PC-9 (cell line): ENCODE measurements at regions of chr12 and their contacts with region 1.

Region 1: DNA sequence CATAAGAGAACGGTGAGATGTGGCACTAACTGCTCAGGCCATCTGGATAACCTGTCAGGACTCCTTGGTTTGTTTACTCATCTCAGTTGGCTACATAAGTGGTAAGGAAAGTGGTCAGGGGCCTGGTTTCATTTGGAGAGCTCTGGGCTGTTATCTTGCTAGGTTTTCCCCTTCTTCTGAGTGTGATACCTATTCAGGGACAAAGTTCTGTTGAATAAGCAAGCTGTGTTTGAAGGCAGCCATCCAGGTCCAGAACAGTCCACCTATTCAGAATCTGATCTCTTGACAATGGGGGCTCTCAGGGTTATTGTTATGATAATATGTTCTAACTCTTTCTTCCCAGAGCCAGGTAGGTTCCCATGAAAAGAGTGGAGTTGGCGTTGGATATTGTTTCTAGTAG is 194.9 kb downstream of the PAH start:
- DNase-seq: no peak
- H3K4me3 ChIP-seq: no peak overlapping the region
- H3K27ac ChIP-seq: no peak overlapping the region
- H3K4me1 ChIP-seq: no peaks in the 10 kb centered on the region
- H3K27me3 ChIP-seq: no peaks in the 10 kb centered on the region
- CTCF ChIP-seq: no peak

Region 2: GRCh38 chr12:102618197-102618877 is 103.8 kb before region 1 on chr12:
- CTCF ChIA-PET with region 1: no interaction called
- POLR2A ChIA-PET with region 1: interaction called, 11 read pairs
- intact Hi-C with region 1: no loop called
- DNase-seq: no peak
- H3K4me3 ChIP-seq: no peak overlapping the region
- H3K27ac ChIP-seq: no peak overlapping the region
- H3K4me1 ChIP-seq: no peaks in the 10 kb centered on the region
- H3K27me3 ChIP-seq: no peaks in the 10 kb centered on the region
- CTCF ChIP-seq: no peak